MCF 10A (cell line): ENCODE measurements at regions of chr5 and their contacts with region 1.

Region 1: DNA sequence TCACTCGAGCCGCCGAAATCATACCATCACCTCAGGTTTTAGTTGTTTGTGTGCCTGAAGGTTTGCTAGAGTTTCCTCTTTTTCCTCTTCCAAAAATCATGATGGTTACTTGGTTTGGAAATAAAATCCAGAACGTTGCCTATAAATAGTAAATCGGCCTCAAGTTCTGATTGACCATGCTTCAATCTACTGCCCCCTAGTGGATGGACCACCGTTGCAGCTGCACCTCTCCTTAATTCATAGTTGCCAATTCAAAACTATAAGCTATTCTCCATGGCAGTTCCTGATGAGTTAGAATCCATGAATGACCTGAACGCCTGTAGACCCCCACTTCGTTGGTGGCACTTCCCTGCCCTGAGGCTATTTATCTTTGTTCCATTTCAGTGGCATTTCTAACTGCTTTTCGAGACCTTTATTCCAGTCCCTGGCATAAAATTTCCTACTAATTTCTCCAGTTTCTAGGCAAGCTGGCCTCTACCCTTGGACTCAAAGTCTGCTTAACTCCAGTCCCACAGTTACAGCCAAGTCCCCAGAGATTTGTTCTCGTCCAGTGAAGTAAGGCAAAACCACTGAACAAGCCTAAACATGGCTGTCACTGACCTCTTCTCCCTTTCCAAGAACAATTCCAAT is 422.6 kb downstream of the EFNA5 start:
- DNase-seq: peak; percentile 67
- H3K4me3 Mint-ChIP-seq: no peak overlapping the region
- H3K27ac Mint-ChIP-seq: no peak overlapping the region
- H3K4me1 Mint-ChIP-seq: no peaks in the 10 kb centered on the region
- H3K27me3 Mint-ChIP-seq: no peaks in the 10 kb centered on the region
- CTCF ChIP-seq: peak; percentile 72

Region 2: GRCh38 chr5:106843812-106844416 is 404.3 kb before region 1 on chr5:
- CTCF ChIA-PET with region 1: interaction called, 11 read pairs
- POLR2A ChIA-PET with region 1: interaction called, 3 read pairs
- intact Hi-C with region 1: loop called (anchors 5 kb)
- DNase-seq: peak; percentile 32
- H3K4me3 Mint-ChIP-seq: no peak overlapping the region
- H3K27ac Mint-ChIP-seq: peak overlapping the region; percentile 4
- H3K4me1 Mint-ChIP-seq: peaks cover 5% of the 10 kb centered on the region
- H3K27me3 Mint-ChIP-seq: peaks cover 10% of the 10 kb centered on the region
- CTCF ChIP-seq: peak; percentile 26

Region 3: DNA sequence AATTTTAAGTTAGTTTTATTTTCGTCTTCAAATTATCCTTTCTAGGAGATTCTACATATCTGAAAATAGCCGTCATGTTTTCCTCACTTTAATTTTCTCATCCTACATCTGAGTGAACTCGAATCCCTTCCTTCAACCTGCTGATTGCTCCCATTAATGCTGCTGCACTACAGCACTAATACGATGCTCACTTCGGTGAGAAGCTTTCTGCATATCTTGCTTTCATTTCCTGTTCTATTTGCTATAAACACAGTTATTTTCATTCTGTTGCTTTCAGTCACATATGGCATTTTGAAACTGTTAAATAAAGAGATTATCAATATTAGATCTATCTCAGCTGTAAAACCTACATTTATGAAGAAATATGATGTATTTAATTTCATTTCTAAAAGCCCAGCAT is 326.6 kb before region 1 on chr5:
- CTCF ChIA-PET with region 1: no interaction called
- POLR2A ChIA-PET with region 1: no interaction called
- intact Hi-C with region 1: loop called (anchors 10 kb)
- DNase-seq: no peak
- H3K4me3 Mint-ChIP-seq: no peak overlapping the region
- H3K27ac Mint-ChIP-seq: no peak overlapping the region
- H3K4me1 Mint-ChIP-seq: no peaks in the 10 kb centered on the region
- H3K27me3 Mint-ChIP-seq: no peaks in the 10 kb centered on the region
- CTCF ChIP-seq: no peak

Region 4: GRCh38 chr5:107444300-107444699 is 196.1 kb after region 1 on chr5:
- CTCF ChIA-PET with region 1: no interaction called
- POLR2A ChIA-PET with region 1: no interaction called
- intact Hi-C with region 1: no loop called
- DNase-seq: no peak
- H3K4me3 Mint-ChIP-seq: no peak overlapping the region
- H3K27ac Mint-ChIP-seq: no peak overlapping the region
- H3K4me1 Mint-ChIP-seq: peaks cover 14% of the 10 kb centered on the region
- H3K27me3 Mint-ChIP-seq: no peaks in the 10 kb centered on the region
- CTCF ChIP-seq: no peak